ENCODE measurements at regions of chr2 and their contacts with region 1.

Region 1: GRCh38 chr2:203718087-203718486 is 11.6 kb downstream of the CD28 start:
- DNase-seq: peak in 9 of 10 donors; percentile 23 to 80 (median 59)
- ATAC-seq: peak; percentile 61 to 63
- H3K4me3 Mint-ChIP-seq: peak overlapping the region; percentile 45 to 83 (median 72)
- H3K27ac Mint-ChIP-seq: peak overlapping the region; percentile 89 to 99 (median 97)
- H3K4me1 Mint-ChIP-seq: peaks cover 65 to 97% (median 96%) of the 10 kb centered on the region in 4 donors
- H3K27me3 Mint-ChIP-seq: no peaks in the 10 kb centered on the region

Region 2: DNA sequence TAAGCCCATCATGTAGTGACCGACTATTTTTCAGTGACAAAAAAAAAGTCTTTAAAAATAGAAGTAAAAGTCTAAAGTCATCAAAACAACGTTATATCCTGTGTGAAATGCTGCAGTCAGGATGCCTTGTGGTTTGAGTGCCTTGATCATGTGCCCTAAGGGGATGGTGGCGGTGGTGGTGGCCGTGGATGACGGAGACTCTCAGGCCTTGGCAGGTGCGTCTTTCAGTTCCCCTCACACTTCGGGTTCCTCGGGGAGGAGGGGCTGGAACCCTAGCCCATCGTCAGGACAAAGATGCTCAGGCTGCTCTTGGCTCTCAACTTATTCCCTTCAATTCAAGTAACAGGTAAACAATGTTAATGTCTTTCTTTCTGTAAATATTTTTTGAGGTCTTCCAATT is 11.7 kb before region 1 on chr2 and contains the start of gene CD28:
- POLR2A ChIA-PET with region 1: interaction called, 133 read pairs
- DNase-seq: peak; percentile 64 to 96 (median 90)
- ATAC-seq: peak; percentile 86 to 90
- H3K4me3 Mint-ChIP-seq: peak within 1 kb of the TSS; percentile 82 to 97 (median 92)
- H3K27ac Mint-ChIP-seq: peak within 1 kb of the TSS; percentile 93 to 99 (median 96)
- H3K4me1 Mint-ChIP-seq: peaks cover 30 to 56% (median 50%) of the 10 kb centered on the region in 4 donors
- H3K27me3 Mint-ChIP-seq: no peaks in the 10 kb centered on the region
- polyA plus RNA-seq, gene CD28: 15.8 to 32.0 (median 29.3) TPM

Region 3: GRCh38 chr2:203730076-203730729 is 12.1 kb after region 1 on chr2:
- POLR2A ChIA-PET with region 1: interaction called, 77 read pairs
- DNase-seq: no peak
- ATAC-seq: peak in 1 of 2 donors; percentile 33
- H3K4me3 Mint-ChIP-seq: peak overlapping the region in 6 of 10 donors; percentile 4 to 42 (median 28)
- H3K27ac Mint-ChIP-seq: peak overlapping the region; percentile 2 to 98 (median 43)
- H3K4me1 Mint-ChIP-seq: peaks cover 40 to 86% (median 71%) of the 10 kb centered on the region in 4 donors
- H3K27me3 Mint-ChIP-seq: no peaks in the 10 kb centered on the region

Region 4: GRCh38 chr2:203751685-203752271 is 33.7 kb after region 1 on chr2:
- POLR2A ChIA-PET with region 1: interaction called, 10 read pairs
- DNase-seq: no peak
- ATAC-seq: no peak
- H3K4me3 Mint-ChIP-seq: no peak overlapping the region
- H3K27ac Mint-ChIP-seq: peak overlapping the region in 1 of 10 donors; percentile 5
- H3K4me1 Mint-ChIP-seq: peaks cover 22 to 44% (median 41%) of the 10 kb centered on the region in 4 donors
- H3K27me3 Mint-ChIP-seq: peaks cover 0 to 4% (median 0%) of the 10 kb centered on the region in 5 donors

Measured in naive thymus-derived CD8-positive, alpha-beta T cell (primary cell).